ENCODE measurements at regions of chr6 and their contacts with region 1.

Region 1: GRCh38 chr6:52995913-52996645 is 995 bp upstream of the GSTA4 start:
- DNase-seq: peak in 13 of 14 experiments; percentile 2 to 75 (median 27)
- ATAC-seq: peak; percentile 7
- H3K4me3 ChIP-seq: peak overlapping the region; percentile 74
- H3K4me3 Mint-ChIP-seq: peak overlapping the region; percentile 91
- H3K27ac ChIP-seq: no peak overlapping the region
- H3K27ac Mint-ChIP-seq: peak overlapping the region; percentile 100
- H3K4me1 ChIP-seq: peaks cover 15% of the 10 kb centered on the region
- H3K4me1 Mint-ChIP-seq: peaks cover 24% of the 10 kb centered on the region
- H3K27me3 ChIP-seq: no peaks in the 10 kb centered on the region
- H3K27me3 Mint-ChIP-seq: peaks cover 14% of the 10 kb centered on the region
- CTCF ChIP-seq: no peak

Region 2: DNA sequence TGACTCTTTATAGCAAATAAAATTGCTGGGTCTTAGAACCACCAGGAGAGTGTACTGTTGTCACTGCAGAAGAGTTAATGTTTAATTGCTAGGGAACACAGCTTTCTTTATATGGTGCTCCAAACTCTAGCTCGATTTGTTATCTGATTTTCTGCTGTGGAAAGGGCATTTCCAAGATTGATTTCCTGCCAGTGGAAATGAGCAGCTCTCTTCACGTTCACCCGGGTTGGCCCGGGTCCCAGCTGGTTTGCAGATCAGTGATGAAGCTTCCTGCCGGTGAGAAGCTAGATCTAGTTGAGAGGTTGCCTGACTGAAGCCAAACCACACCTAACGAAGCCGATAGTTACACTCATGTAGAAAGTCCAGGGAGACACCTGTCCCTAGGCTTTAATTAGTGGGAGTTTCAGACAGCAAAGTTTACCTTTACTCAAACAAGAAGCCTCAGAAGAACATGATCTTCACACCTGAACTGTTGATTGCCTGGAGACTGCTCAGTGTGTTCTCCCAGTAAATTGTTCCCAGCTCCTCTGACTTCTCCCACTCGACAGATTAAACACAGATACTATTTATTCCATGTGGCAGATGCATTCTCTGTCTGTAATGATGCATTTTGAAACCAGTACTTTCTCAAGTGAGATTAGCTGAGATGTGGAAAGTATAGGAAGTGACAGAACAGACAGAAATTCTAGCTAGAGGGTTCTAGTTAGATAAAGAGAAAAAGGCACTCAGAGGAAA is 606.3 kb before region 1 on chr6:
- CTCF ChIA-PET with region 1: no interaction called
- POLR2A ChIA-PET with region 1: interaction called, 4 read pairs
- intact Hi-C with region 1: loop called in 1 of 2 experiments (anchors 5 kb)
- DNase-seq: peak; percentile 32 to 87 (median 60)
- ATAC-seq: peak; percentile 45
- H3K4me3 ChIP-seq: peak overlapping the region; percentile 31
- H3K4me3 Mint-ChIP-seq: peak overlapping the region; percentile 87
- H3K27ac ChIP-seq: peak overlapping the region; percentile 63 to 91
- H3K27ac Mint-ChIP-seq: peak overlapping the region; percentile 97
- H3K4me1 ChIP-seq: peaks cover 59% of the 10 kb centered on the region
- H3K4me1 Mint-ChIP-seq: peaks cover 93% of the 10 kb centered on the region
- H3K27me3 ChIP-seq: no peaks in the 10 kb centered on the region
- H3K27me3 Mint-ChIP-seq: no peaks in the 10 kb centered on the region
- CTCF ChIP-seq: peak; percentile 53

Region 3: GRCh38 chr6:52881996-52882841 is 113.9 kb before region 1 on chr6:
- CTCF ChIA-PET with region 1: no interaction called
- POLR2A ChIA-PET with region 1: no interaction called
- intact Hi-C with region 1: loop called (anchors 5 kb)
- DNase-seq: peak; percentile 42 to 82 (median 52)
- ATAC-seq: peak; percentile 99
- H3K4me3 ChIP-seq: peak overlapping the region; percentile 59
- H3K4me3 Mint-ChIP-seq: peak overlapping the region; percentile 83
- H3K27ac ChIP-seq: no peak overlapping the region
- H3K27ac Mint-ChIP-seq: no peak overlapping the region
- H3K4me1 ChIP-seq: peaks cover 6% of the 10 kb centered on the region
- H3K4me1 Mint-ChIP-seq: no peaks in the 10 kb centered on the region
- H3K27me3 ChIP-seq: no peaks in the 10 kb centered on the region
- H3K27me3 Mint-ChIP-seq: no peaks in the 10 kb centered on the region
- CTCF ChIP-seq: peak; percentile 91

Region 4: DNA sequence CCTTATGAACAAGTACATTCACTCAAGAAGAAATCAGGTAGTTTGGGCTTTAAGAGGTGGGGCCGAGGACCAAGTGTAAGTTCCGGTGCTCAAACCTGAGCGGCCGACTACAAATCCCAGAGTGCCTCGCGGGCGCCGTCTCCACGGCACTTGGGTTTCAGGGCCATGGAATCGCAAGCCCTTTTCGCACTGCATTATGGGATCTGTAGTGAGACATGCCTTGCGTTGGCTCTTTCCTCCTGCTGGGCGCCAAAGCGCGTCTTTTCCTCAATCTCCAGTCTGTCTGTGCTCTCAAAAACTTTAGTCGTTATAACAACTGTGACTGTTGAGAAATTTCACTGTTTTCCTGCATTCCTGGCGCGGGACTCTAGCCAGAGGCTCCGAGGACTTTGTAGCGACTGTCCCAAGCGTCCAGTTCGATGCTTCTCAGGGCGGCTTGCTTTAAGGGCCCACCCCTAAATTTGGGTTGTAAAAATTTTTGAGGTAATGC is 68.7 kb after region 1 on chr6:
- CTCF ChIA-PET with region 1: interaction called, 24 read pairs
- POLR2A ChIA-PET with region 1: interaction called, 8 read pairs
- intact Hi-C with region 1: no loop called
- DNase-seq: peak; percentile 90 to 98 (median 94)
- ATAC-seq: peak; percentile 86
- H3K4me3 ChIP-seq: peak overlapping the region; percentile 92
- H3K4me3 Mint-ChIP-seq: peak overlapping the region; percentile 97
- H3K27ac ChIP-seq: peak overlapping the region; percentile 68 to 84
- H3K27ac Mint-ChIP-seq: peak overlapping the region; percentile 92
- H3K4me1 ChIP-seq: peaks cover 36% of the 10 kb centered on the region
- H3K4me1 Mint-ChIP-seq: peaks cover 70% of the 10 kb centered on the region
- H3K27me3 ChIP-seq: no peaks in the 10 kb centered on the region
- H3K27me3 Mint-ChIP-seq: no peaks in the 10 kb centered on the region
- CTCF ChIP-seq: peak; percentile 14

Region 5: DNA sequence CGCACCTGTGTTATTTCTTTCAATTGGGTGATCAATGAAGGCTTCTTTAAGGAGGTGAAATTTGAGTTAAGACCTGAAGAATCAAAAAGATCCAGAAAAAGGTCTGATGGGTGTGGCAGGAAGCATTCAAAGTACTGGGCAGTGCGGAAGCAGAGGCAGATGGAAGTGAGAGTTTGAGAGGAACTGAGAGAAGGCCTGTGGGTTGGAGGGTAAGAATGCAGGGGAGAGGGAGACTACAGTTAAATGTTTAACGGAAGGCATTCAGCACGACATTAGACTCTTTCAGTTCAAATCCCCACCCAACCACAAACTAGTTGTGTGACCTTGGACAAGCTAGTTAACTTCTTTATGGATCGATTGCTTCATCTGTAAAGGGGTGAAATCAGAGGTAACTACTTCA is 203.1 kb after region 1 on chr6:
- CTCF ChIA-PET with region 1: no interaction called
- POLR2A ChIA-PET with region 1: no interaction called
- intact Hi-C with region 1: no loop called
- DNase-seq: peak in 2 of 14 experiments; percentile 14 to 15
- ATAC-seq: no peak
- H3K4me3 ChIP-seq: no peak overlapping the region
- H3K4me3 Mint-ChIP-seq: no peak overlapping the region
- H3K27ac ChIP-seq: no peak overlapping the region
- H3K27ac Mint-ChIP-seq: no peak overlapping the region
- H3K4me1 ChIP-seq: no peaks in the 10 kb centered on the region
- H3K4me1 Mint-ChIP-seq: no peaks in the 10 kb centered on the region
- H3K27me3 ChIP-seq: no peaks in the 10 kb centered on the region
- H3K27me3 Mint-ChIP-seq: no peaks in the 10 kb centered on the region
- CTCF ChIP-seq: no peak

Region 6: GRCh38 chr6:53651764-53652401 is 655.8 kb after region 1 on chr6:
- CTCF ChIA-PET with region 1: no interaction called
- POLR2A ChIA-PET with region 1: interaction called, 3 read pairs
- intact Hi-C with region 1: loop called in 1 of 2 experiments (anchors 5 kb)
- DNase-seq: peak; percentile 56 to 90 (median 74)
- ATAC-seq: peak; percentile 88
- H3K4me3 ChIP-seq: peak overlapping the region; percentile 62
- H3K4me3 Mint-ChIP-seq: peak overlapping the region; percentile 94
- H3K27ac ChIP-seq: peak overlapping the region in 1 of 2 donors; percentile 38
- H3K27ac Mint-ChIP-seq: peak overlapping the region; percentile 81
- H3K4me1 ChIP-seq: peaks cover 16% of the 10 kb centered on the region
- H3K4me1 Mint-ChIP-seq: peaks cover 34% of the 10 kb centered on the region
- H3K27me3 ChIP-seq: no peaks in the 10 kb centered on the region
- H3K27me3 Mint-ChIP-seq: no peaks in the 10 kb centered on the region
- CTCF ChIP-seq: peak; percentile 26

Measured in CD4-positive, alpha-beta T cell (primary cell).